ENCODE measurements at regions of chr5 and their contacts with region 1.

Region 1: DNA sequence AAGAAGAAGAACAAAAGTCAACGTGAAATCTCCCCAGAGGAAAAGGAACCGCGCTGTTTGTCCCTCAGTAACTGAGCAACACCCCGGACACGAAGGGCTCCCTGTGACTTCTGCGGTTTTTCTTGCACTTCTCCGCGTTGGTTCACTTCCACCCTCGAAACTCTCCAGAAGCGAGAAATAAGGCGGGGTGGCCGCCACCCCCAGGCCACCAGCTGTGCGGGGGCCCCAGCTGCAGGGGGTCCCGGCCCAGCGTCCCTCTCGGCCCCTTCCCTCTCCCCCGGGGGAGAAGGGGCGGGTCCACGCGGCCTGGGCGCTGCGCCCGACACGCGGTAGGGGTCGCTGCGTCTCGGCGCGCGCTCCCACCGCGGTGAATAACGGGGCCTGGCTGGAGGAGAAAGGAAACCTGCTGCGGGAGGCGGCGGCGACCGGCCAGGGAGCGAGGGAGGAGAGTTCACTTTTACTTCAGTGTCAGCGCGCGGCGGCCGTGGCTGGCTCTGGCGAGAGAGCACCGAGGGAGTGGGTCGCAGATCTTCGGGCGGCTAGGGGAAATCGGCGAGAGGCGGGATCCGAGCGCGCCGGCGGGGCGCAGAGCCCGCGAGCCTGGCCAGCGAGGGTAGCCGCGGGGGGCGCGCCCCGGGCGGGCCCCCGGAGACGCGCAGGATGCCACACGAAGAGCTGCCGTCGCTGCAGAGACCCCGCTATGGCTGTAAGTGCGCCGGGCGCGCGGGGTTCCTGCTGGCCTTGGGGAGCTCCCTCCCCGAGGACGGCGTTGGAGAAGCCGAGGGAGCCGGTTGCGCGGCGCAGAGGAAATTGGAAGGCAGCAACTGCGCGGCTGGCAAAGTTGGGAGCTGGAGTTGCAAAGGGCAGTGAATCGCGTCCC is at the start of gene IQGAP2:
- DNase-seq: peak; percentile 88
- ATAC-seq: peak; percentile 62
- H3K4me3 Mint-ChIP-seq: peak within 1 kb of the TSS; percentile 93
- H3K27ac Mint-ChIP-seq: peak within 1 kb of the TSS; percentile 100
- H3K4me1 Mint-ChIP-seq: peaks cover 56% of the 10 kb centered on the region
- H3K27me3 Mint-ChIP-seq: peaks cover 4% of the 10 kb centered on the region
- total RNA-seq, gene IQGAP2: 62.7 to 82.7 TPM

Region 2: DNA sequence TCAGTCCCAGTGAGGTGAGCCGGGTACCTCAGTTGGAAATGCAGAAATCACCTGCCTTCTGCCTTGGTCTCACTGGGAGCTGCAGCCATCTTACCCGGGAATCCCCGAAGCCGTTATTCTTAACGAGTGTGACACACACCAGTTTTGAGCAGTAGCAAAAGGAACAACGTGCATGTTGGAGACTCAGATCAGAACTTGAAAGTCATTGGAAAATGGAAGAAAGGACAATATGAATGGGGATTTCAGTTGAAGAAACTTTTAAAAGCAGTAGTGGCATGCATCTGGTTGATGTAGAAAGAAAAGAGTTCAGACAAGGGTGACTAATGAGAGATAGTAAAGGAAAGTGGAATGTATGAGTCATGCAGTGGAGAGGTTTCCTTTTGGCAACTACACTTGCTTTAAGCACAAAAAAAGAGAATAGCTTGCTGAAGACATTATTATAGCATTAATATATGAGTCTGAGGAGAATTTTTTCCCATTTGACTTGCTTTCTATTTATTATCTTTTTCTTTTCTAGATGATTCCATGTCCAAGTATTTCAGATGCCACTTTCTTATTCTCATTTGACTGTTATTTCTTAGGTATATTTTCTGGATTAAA is 836.3 kb before region 1 on chr5:
- CTCF ChIA-PET with region 1: no interaction called
- POLR2A ChIA-PET with region 1: no interaction called
- intact Hi-C with region 1: loop called in 1 of 2 experiments (anchors 1 kb)
- DNase-seq: peak; percentile 78
- ATAC-seq: peak; percentile 85
- H3K4me3 Mint-ChIP-seq: peak overlapping the region; percentile 56
- H3K27ac Mint-ChIP-seq: peak overlapping the region; percentile 96
- H3K4me1 Mint-ChIP-seq: peaks cover 63% of the 10 kb centered on the region
- H3K27me3 Mint-ChIP-seq: no peaks in the 10 kb centered on the region

Region 3: GRCh38 chr5:76331126-76331525 is 72.0 kb before region 1 on chr5:
- CTCF ChIA-PET with region 1: interaction called, 4 read pairs
- POLR2A ChIA-PET with region 1: interaction called, 4 read pairs
- intact Hi-C with region 1: loop called in 1 of 2 experiments (anchors 5 kb)
- DNase-seq: peak; percentile 52
- ATAC-seq: peak; percentile 69
- H3K4me3 Mint-ChIP-seq: no peak overlapping the region
- H3K27ac Mint-ChIP-seq: peak overlapping the region; percentile 59
- H3K4me1 Mint-ChIP-seq: peaks cover 64% of the 10 kb centered on the region
- H3K27me3 Mint-ChIP-seq: no peaks in the 10 kb centered on the region

Region 4: DNA sequence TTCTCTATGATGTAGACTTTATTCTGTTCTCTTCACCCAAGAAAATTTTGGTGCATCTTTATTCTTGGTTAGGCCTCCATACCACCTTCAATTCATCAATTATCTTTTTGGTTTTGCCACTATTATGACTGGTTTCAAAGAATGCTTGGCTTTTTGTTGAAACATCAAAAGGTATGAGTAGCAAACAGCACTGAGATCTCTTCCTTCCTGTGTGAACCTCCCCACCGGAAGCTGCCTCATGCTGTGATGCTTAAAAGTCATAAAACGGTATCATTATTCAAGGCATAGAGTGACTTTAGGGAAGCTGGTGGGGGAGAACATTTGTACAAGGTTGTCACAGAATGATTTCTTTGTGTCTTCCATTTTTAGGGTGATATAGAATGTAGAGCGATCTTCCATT is 70.5 kb after region 1 on chr5:
- CTCF ChIA-PET with region 1: interaction called, 23 read pairs
- POLR2A ChIA-PET with region 1: interaction called, 6 read pairs
- intact Hi-C with region 1: loop called (anchors 1 kb)
- DNase-seq: peak; percentile 82
- ATAC-seq: peak; percentile 87
- H3K4me3 Mint-ChIP-seq: peak overlapping the region; percentile 16
- H3K27ac Mint-ChIP-seq: peak overlapping the region; percentile 92
- H3K4me1 Mint-ChIP-seq: peaks cover 75% of the 10 kb centered on the region
- H3K27me3 Mint-ChIP-seq: no peaks in the 10 kb centered on the region

Region 5: GRCh38 chr5:76582230-76583162 is 179.4 kb after region 1 on chr5:
- CTCF ChIA-PET with region 1: interaction called, 5 read pairs
- POLR2A ChIA-PET with region 1: interaction called, 6 read pairs
- intact Hi-C with region 1: loop called (anchors 1 kb)
- DNase-seq: peak; percentile 52
- ATAC-seq: peak; percentile 93
- H3K4me3 Mint-ChIP-seq: no peak overlapping the region
- H3K27ac Mint-ChIP-seq: peak overlapping the region; percentile 60
- H3K4me1 Mint-ChIP-seq: peaks cover 20% of the 10 kb centered on the region
- H3K27me3 Mint-ChIP-seq: no peaks in the 10 kb centered on the region

Region 6: GRCh38 chr5:76736679-76737556 is 333.8 kb after region 1 on chr5:
- CTCF ChIA-PET with region 1: no interaction called
- POLR2A ChIA-PET with region 1: interaction called, 4 read pairs
- intact Hi-C with region 1: loop called in 1 of 2 experiments (anchors 2 kb)
- DNase-seq: no peak
- ATAC-seq: no peak
- H3K4me3 Mint-ChIP-seq: no peak overlapping the region
- H3K27ac Mint-ChIP-seq: no peak overlapping the region
- H3K4me1 Mint-ChIP-seq: peaks cover 24% of the 10 kb centered on the region
- H3K27me3 Mint-ChIP-seq: no peaks in the 10 kb centered on the region

Region 7: DNA sequence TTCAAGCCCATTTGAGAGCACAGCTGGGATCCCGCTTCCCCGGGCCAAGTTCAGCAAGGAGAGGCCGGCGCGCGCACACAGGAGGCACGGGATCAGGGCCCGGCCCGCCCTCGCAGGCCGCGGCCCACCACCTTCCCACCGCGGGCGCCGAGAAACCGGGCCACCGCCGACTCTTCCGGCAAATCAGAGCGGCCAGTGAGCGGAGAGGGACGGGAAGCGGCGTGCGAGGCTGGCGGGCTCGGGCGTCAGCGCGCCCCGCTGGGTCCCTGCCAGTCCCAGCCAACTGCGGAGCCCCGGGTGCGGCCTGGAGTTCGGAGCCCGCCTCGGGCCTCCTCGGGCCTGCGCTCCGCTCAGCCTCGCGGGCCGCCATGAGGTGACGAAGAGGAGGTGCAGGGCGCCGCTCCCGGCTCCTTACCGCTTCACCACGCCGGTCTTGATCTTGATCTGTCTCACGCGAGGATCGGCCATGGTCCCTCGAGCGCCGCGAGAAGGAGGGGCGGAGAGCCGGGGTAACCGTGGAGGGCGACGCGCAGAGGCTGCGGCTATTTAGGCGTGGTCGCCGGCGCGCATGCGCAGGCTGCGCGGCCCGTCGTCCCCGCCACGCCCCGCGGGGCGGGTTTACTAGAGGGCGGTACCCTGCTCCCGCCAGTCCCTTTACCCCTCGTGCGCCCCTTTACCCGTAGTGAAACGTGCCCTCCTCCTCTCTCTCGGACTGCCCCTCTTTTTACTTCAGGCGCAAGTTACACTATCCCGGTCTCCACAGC is 1372.8 kb after region 1 on chr5 and contains the start of gene TBCA:
- CTCF ChIA-PET with region 1: no interaction called
- POLR2A ChIA-PET with region 1: no interaction called
- intact Hi-C with region 1: loop called in 1 of 2 experiments (anchors 5 kb)
- DNase-seq: peak; percentile 92
- ATAC-seq: peak; percentile 88
- H3K4me3 Mint-ChIP-seq: peak within 1 kb of the TSS; percentile 98
- H3K27ac Mint-ChIP-seq: peak within 1 kb of the TSS; percentile 95
- H3K4me1 Mint-ChIP-seq: peaks cover 52% of the 10 kb centered on the region
- H3K27me3 Mint-ChIP-seq: no peaks in the 10 kb centered on the region
- total RNA-seq, gene TBCA: 195 to 210 TPM